Heart left ventricle (tissue), 16 donors: ENCODE measurements at regions of chrX and their contacts with region 1.

Region 1: DNA sequence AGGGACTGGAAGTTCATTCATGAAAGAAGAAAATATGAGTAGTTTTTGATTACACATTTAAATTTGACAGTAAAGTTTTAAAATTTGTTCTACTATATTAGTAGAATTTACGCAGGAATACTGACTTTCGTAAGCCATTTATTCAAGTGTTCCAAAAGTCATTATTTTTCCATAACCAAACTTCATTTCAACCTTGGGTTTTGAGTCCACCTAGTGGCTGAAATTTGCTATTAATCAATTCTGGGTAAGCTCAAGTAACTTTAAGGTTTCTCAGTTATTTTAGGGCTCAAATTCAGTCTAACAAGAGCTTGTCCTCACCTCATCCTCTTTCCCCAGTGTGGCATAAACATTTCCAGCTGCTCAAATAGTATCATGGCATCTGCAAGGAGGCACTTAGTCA is 175.4 kb downstream of the SH3BGRL start:
- DNase-seq: no peak
- ATAC-seq: no peak
- H3K4me3 ChIP-seq: no peak overlapping the region
- H3K27ac ChIP-seq: no peak overlapping the region
- H3K4me1 ChIP-seq: no peaks in the 10 kb centered on the region
- H3K27me3 ChIP-seq: no peaks in the 10 kb centered on the region
- CTCF ChIP-seq: peak; percentile 23 to 63 (median 46)
- POLR2A ChIP-seq: no peak

Region 2: DNA sequence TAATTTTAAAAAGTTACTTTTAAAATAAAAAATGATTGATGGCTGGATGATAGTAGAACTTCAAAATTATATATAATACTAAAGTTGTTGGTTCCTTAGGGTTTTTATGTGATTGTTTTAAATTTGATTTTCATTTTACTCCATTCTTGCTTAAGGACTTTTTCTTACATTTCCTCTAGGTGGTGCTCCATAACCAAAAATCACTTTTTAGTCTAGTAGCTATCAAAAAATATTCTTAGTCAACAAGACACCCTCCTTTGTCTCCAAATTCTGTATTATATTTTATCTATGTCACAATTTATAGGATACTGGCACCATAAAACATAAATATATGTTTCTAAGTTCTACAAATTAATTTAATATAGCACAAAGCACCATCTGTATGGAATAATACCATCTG is 500.5 kb before region 1 on chrX:
- intact Hi-C with region 1: loop called in 2 of 10 experiments (anchors 10 kb)
- DNase-seq: no peak
- ATAC-seq: no peak
- H3K4me3 ChIP-seq: no peak overlapping the region
- H3K27ac ChIP-seq: no peak overlapping the region
- H3K4me1 ChIP-seq: no peaks in the 10 kb centered on the region
- H3K27me3 ChIP-seq: no peaks in the 10 kb centered on the region
- CTCF ChIP-seq: peak; percentile 23 to 57 (median 40)
- POLR2A ChIP-seq: no peak

Region 3: GRCh38 chrX:81121513-81122382 is 255.6 kb before region 1 on chrX:
- intact Hi-C with region 1: loop called in 1 of 10 experiments (anchors 5 kb)
- DNase-seq: peak; percentile 86 to 91 (median 89)
- ATAC-seq: peak; percentile 98 to 100 (median 100)
- H3K4me3 ChIP-seq: peak overlapping the region; percentile 23 to 73 (median 54)
- H3K27ac ChIP-seq: peak overlapping the region in 9 of 12 donors; percentile 7 to 66 (median 38)
- H3K4me1 ChIP-seq: peaks cover 0 to 7% (median 0%) of the 10 kb centered on the region in 12 donors
- H3K27me3 ChIP-seq: peaks cover 0 to 22% (median 0%) of the 10 kb centered on the region in 9 donors
- CTCF ChIP-seq: no peak
- POLR2A ChIP-seq: no peak

Region 4: DNA sequence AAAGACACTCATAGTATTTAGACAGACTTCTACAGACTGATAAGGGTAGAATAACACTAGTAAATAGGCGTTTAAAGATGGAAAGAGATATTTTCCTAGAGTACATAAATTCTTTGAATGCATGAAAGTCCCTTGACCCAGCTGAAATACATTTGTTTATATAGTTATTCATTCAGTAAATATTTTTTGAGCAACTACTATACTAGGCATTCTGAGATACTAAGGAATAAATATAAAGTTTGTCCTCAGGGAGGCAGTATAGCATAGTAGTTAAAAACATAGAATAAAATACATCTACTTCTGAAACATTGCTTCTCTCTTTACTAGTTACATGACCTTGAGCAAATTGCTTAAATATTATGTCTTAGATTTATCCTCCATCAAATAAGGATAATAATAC is 203.0 kb before region 1 on chrX:
- intact Hi-C with region 1: loop called in 7 of 10 experiments (anchors 5 to 10 kb)
- DNase-seq: no peak
- ATAC-seq: no peak
- H3K4me3 ChIP-seq: no peak overlapping the region
- H3K27ac ChIP-seq: no peak overlapping the region
- H3K4me1 ChIP-seq: no peaks in the 10 kb centered on the region
- H3K27me3 ChIP-seq: peaks cover 0 to 5% (median 0%) of the 10 kb centered on the region in 9 donors
- CTCF ChIP-seq: peak in 6 of 12 donors; percentile 18 to 44 (median 34)
- POLR2A ChIP-seq: no peak

Region 5: GRCh38 chrX:81195712-81196111 is 181.6 kb before region 1 on chrX:
- intact Hi-C with region 1: loop called in 1 of 10 experiments (anchors 10 kb)
- DNase-seq: peak in 3 of 5 donors; percentile 20 to 42 (median 27)
- ATAC-seq: peak in 3 of 4 donors; percentile 29 to 55 (median 46)
- H3K4me3 ChIP-seq: no peak overlapping the region
- H3K27ac ChIP-seq: no peak overlapping the region
- H3K4me1 ChIP-seq: peaks cover 0 to 2% (median 0%) of the 10 kb centered on the region in 12 donors
- H3K27me3 ChIP-seq: no peaks in the 10 kb centered on the region
- CTCF ChIP-seq: peak; percentile 35 to 79 (median 58)
- POLR2A ChIP-seq: no peak